CD4-positive, alpha-beta memory T cell (primary cell): ENCODE measurements at regions of chr9 and their contacts with region 1.

Region 1: DNA sequence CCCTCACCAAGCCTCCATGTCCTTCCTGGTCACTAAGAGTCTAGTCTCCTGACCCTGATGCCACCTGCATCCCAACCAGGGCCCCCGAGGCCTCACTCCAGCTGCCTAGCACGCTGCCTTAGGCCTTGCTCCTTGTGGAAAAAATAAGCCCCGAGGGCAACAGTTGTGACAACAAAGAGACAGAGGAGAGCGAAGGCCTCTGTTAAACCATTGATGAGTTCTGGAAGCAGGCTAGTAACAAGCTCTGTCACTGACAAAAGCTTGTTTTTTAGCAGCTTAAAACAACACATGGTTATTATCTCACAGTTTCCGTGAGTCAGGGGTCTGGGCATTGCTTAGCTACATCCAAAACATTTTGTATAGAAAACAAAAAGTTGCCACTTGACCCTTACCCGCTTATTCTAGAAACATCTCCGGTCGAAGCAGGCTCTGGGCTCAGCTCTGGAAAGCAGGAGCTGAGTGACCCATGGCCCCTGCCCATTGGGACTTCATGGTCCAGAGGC is 48.2 kb upstream of the TBC1D2 start:
- DNase-seq: no peak
- H3K4me3 ChIP-seq: no peak overlapping the region
- H3K4me3 Mint-ChIP-seq: no peak overlapping the region
- H3K27ac ChIP-seq: no peak overlapping the region
- H3K27ac Mint-ChIP-seq: no peak overlapping the region
- H3K4me1 ChIP-seq: no peaks in the 10 kb centered on the region
- H3K4me1 Mint-ChIP-seq: no peaks in the 10 kb centered on the region
- H3K27me3 ChIP-seq: no peaks in the 10 kb centered on the region
- H3K27me3 Mint-ChIP-seq: peaks cover 0 to 2% of the 10 kb centered on the region in 2 donors

Region 2: GRCh38 chr9:98315551-98316060 is 11.9 kb after region 1 on chr9:
- CTCF ChIA-PET with region 1: interaction called, 16 read pairs
- POLR2A ChIA-PET with region 1: no interaction called
- intact Hi-C with region 1: no loop called
- DNase-seq: peak; percentile 57 to 66 (median 61)
- H3K4me3 ChIP-seq: no peak overlapping the region
- H3K4me3 Mint-ChIP-seq: no peak overlapping the region
- H3K27ac ChIP-seq: no peak overlapping the region
- H3K27ac Mint-ChIP-seq: no peak overlapping the region
- H3K4me1 ChIP-seq: no peaks in the 10 kb centered on the region
- H3K4me1 Mint-ChIP-seq: peaks cover 0 to 6% (median 3%) of the 10 kb centered on the region in 4 donors
- H3K27me3 ChIP-seq: no peaks in the 10 kb centered on the region
- H3K27me3 Mint-ChIP-seq: peaks cover 4% of the 10 kb centered on the region in 2 donors

Region 3: GRCh38 chr9:98391867-98392266 is 88.2 kb after region 1 on chr9:
- CTCF ChIA-PET with region 1: no interaction called
- POLR2A ChIA-PET with region 1: no interaction called
- intact Hi-C with region 1: no loop called
- DNase-seq: peak in 2 of 5 donors; percentile 1 to 2
- H3K4me3 ChIP-seq: no peak overlapping the region
- H3K4me3 Mint-ChIP-seq: peak overlapping the region in 2 of 8 donors; percentile 23 to 65
- H3K27ac ChIP-seq: no peak overlapping the region
- H3K27ac Mint-ChIP-seq: peak overlapping the region in 5 of 7 donors; percentile 8 to 92 (median 43)
- H3K4me1 ChIP-seq: peaks cover 8% of the 10 kb centered on the region
- H3K4me1 Mint-ChIP-seq: peaks cover 9 to 12% (median 12%) of the 10 kb centered on the region in 4 donors
- H3K27me3 ChIP-seq: no peaks in the 10 kb centered on the region
- H3K27me3 Mint-ChIP-seq: peaks cover 10 to 15% of the 10 kb centered on the region in 2 donors